ENCODE measurements at regions of chr1 and their contacts with region 1.

Region 1: DNA sequence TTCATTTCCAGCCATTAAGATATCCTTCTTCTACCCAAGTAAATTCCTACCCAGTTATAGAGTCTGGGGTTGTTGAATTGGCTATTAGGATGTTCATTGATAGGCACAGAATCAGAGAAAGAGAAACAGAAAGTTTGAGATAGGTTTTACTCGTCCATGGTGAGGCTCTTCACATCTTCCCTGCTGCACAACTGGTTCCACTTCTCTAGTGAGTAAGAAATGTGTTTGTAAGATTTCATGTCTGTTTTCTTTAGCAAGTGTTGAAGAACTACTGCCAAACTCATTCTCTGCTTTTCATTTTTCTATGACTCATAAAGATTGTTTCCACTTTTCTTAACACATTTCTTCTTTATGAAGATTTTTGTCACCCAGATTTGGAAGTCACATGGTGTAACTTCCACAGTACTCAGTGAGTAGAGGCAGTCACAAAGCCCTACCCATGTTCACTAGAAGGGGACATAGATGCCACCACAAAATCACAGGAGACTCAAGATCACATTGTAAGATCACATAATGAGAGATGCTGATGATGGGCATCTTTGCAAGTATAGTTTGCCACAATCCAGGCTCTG is 152.3 kb downstream of the SNX7 start:
- DNase-seq: no peak
- H3K4me3 ChIP-seq: no peak overlapping the region
- H3K27ac ChIP-seq: no peak overlapping the region
- H3K4me1 ChIP-seq: no peaks in the 10 kb centered on the region
- H3K27me3 ChIP-seq: no peaks in the 10 kb centered on the region
- CTCF ChIP-seq: no peak
- EP300 ChIP-seq: no peak
- POLR2A ChIP-seq: no peak

Region 2: DNA sequence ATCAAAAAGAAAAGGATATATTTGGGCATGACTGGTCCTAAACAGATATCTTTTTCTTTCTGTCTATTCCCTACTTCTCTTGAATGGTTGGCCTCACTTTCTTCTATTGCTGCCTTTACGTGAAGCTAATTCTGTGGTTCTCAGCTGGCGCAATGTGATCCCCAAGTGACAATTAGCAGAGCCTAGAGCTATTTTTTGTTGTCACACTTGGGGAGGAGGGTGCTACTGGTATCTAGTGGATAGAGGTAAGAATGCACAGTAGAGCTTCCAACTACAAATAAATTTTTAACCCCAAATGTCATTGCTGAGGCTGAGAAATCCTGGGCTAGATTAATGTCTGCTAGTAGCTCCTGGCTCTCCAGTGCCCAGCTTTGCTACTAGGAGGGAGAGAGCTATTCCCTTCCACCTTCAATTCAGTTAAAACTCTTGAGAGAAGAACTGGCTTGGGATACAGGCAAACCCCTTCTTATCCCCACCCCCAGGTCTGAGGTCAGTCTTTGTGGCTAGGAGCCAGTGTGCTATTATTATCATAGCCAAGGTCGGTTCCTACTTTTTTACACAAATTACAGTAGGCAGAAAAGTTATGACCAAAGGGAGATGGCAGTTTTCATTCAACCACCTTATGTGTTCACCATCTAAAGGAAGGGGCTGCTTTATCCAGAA is 50.2 kb before region 1 on chr1:
- in situ Hi-C with region 1: no loop called
- intact Hi-C with region 1: loop called (anchors 2 kb)
- DNase-seq: no peak
- H3K4me3 ChIP-seq: no peak overlapping the region
- H3K27ac ChIP-seq: no peak overlapping the region
- H3K4me1 ChIP-seq: no peaks in the 10 kb centered on the region
- H3K27me3 ChIP-seq: no peaks in the 10 kb centered on the region
- CTCF ChIP-seq: no peak
- EP300 ChIP-seq: no peak
- POLR2A ChIP-seq: no peak

Region 3: DNA sequence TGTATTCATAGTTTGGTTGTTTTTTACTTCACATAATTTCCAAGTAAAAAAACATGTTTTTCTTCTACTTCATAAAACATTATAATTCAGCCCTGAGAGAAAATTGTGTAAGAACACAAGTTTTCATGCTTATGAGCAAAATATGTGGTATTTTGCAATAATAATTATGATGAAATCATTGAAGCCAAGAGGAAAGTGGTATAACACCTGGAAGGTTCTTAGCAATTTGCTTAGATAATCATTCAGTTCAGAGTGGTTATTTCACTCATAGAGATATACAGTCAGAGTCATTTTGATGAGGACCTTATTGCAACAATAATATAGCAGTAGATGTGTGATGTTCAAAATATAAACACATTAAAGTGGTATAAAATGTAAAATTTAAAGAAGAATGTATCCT is 544.9 kb after region 1 on chr1:
- in situ Hi-C with region 1: no loop called
- intact Hi-C with region 1: no loop called
- DNase-seq: no peak
- H3K4me3 ChIP-seq: no peak overlapping the region
- H3K27ac ChIP-seq: no peak overlapping the region
- H3K4me1 ChIP-seq: no peaks in the 10 kb centered on the region
- H3K27me3 ChIP-seq: no peaks in the 10 kb centered on the region
- CTCF ChIP-seq: no peak
- EP300 ChIP-seq: no peak
- POLR2A ChIP-seq: no peak

Region 4: DNA sequence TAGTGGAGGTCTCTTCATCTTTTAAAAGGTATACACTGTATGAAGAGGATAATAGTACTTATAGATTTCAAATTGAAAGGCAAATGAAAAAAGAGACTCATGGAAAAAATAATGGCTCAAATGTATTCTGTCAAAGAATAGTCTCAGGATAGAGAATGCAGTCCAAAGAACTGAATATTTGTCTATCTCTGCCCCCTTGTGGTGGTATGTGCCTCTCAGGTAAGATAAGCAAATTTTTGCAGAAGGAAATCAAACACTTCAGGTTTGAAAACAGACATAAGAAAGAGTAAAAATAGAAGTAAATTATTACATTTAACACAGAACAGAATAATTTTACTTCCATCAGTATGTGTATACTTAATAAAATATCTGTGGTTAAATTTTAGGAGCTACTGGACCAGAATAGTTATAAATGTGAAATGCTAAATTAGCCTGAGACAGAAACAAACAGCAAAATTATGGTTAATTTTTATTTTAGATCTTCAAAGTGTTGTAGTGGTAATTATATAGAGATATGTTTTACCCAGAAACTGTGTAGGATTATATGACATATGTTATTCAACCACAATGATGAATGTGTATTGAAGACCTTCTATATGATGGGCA is 667.7 kb after region 1 on chr1:
- in situ Hi-C with region 1: loop called in 1 of 4 experiments (anchors 25 kb)
- intact Hi-C with region 1: no loop called
- DNase-seq: peak; percentile 23
- H3K4me3 ChIP-seq: no peak overlapping the region
- H3K27ac ChIP-seq: no peak overlapping the region
- H3K4me1 ChIP-seq: no peaks in the 10 kb centered on the region
- H3K27me3 ChIP-seq: no peaks in the 10 kb centered on the region
- CTCF ChIP-seq: peak; percentile 64 to 76 (median 67)
- EP300 ChIP-seq: no peak
- POLR2A ChIP-seq: no peak